ENCODE measurements at regions of chr17 and their contacts with region 1.

Region 1: DNA sequence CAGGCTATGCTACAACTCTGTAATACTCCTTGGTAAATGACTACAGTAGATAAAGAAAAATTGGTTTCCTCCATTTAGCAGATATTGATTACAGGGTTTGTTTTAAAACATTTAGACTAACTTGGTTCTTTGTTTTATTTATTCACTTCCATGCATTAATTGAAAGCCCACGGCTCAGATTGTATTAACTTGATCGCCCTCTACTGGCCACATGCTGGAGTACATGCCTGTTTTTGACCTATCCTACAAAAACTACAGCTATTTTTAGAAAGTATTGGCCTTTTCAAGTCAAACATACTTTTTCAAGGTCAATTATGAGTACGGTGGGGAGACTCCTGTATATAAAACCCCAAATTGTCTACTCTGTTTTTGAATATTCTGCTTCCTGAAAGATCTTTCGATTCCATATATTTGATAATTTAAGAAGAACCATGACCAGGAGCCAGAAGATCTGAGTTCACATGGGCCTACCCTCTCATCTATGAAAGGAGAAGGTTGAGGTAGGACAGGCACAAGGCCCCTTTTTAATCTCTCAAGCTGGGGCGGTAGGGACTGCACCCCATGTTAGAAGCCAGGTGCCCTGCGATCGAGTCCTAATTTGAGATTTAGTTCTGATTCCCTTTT is 51.8 kb downstream of the CA10 start:
- DNase-seq: no peak
- H3K4me3 ChIP-seq: no peak overlapping the region
- H3K27ac ChIP-seq: no peak overlapping the region
- H3K4me1 ChIP-seq: no peaks in the 10 kb centered on the region
- H3K27me3 ChIP-seq: no peaks in the 10 kb centered on the region
- CTCF ChIP-seq: peak in 3 of 4 experiments; percentile 41 to 63 (median 48)
- EP300 ChIP-seq: no peak
- POLR2A ChIP-seq: no peak

Region 2: DNA sequence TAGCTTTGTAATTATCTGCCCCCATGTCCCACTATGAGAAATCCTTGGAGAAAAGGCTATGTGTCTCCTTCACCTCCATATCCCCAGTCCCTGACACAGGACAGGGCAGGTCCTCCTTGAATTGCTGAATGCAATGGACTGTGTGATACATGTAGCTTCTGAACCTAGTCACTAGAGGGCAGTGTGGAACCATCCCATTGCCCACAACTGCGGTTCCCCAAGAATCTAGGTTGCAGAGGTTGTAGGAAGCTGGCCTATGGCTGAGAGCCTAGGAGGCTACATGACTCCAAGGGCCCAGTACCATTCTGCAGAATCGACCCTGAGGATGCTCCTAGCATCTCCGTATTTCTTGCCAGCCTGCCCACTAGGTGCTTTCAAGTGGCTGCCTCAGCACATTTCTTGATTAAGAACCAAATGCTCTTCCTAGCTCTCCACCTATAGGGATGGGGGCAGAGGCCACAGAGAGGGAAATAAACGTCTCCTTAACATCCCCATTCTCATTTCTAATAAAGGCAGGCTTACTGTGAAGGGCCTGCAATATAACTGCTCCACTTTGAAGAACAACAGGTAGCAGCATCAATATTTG is 342.3 kb before region 1 on chr17:
- intact Hi-C with region 1: loop called (anchors 10 kb)
- DNase-seq: peak; percentile 57
- H3K4me3 ChIP-seq: no peak overlapping the region
- H3K27ac ChIP-seq: no peak overlapping the region
- H3K4me1 ChIP-seq: peaks cover 0 to 4% (median 0%) of the 10 kb centered on the region in 4 donors
- H3K27me3 ChIP-seq: peaks cover 0 to 13% (median 0%) of the 10 kb centered on the region in 3 donors
- CTCF ChIP-seq: peak in 3 of 4 experiments; percentile 42 to 69 (median 52)
- EP300 ChIP-seq: no peak
- POLR2A ChIP-seq: no peak

Region 3: GRCh38 chr17:52048137-52048898 is 58.4 kb before region 1 on chr17:
- intact Hi-C with region 1: no loop called
- DNase-seq: no peak
- H3K4me3 ChIP-seq: no peak overlapping the region
- H3K27ac ChIP-seq: no peak overlapping the region
- H3K4me1 ChIP-seq: no peaks in the 10 kb centered on the region
- H3K27me3 ChIP-seq: no peaks in the 10 kb centered on the region
- CTCF ChIP-seq: no peak
- EP300 ChIP-seq: no peak
- POLR2A ChIP-seq: no peak

Measured in sigmoid colon (tissue), 7 donors.